PC-9 (cell line): ENCODE measurements at regions of chr1 and their contacts with region 1.

Region 1: DNA sequence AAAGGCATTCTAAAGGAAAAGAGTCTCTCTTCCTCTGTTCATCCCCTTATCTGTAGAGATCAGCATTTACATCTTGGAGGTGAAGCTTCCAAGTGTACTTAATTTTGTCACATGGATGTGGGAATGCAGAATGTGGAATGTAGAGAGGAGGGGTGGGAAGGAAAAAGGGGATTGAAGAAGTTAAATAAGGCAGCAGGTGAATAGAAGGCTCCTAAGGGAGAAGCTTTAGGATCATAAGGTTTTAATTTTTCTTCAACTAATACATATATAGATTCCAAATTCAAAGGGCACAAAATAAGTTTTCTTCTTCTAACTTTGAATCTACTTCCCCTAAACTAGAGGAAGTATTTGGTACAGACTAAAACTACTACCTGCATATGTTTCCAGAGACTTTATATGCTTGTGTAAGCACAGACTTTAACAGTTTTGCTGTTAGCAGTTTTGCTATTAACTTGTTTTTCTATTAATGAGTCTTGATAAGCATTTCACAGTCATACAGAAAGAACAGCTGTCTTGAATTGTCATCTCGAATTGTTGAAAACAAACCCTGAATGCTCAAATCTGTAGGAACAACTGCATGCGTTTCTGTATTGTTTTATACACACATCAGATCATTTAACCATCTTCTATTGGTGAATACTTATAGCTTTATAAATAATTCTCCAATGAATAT is 12.7 kb downstream of the TENT5C start:
- DNase-seq: no peak
- H3K4me3 ChIP-seq: no peak overlapping the region
- H3K27ac ChIP-seq: no peak overlapping the region
- H3K4me1 ChIP-seq: peaks cover 2% of the 10 kb centered on the region
- H3K27me3 ChIP-seq: no peaks in the 10 kb centered on the region
- CTCF ChIP-seq: no peak

Region 2: DNA sequence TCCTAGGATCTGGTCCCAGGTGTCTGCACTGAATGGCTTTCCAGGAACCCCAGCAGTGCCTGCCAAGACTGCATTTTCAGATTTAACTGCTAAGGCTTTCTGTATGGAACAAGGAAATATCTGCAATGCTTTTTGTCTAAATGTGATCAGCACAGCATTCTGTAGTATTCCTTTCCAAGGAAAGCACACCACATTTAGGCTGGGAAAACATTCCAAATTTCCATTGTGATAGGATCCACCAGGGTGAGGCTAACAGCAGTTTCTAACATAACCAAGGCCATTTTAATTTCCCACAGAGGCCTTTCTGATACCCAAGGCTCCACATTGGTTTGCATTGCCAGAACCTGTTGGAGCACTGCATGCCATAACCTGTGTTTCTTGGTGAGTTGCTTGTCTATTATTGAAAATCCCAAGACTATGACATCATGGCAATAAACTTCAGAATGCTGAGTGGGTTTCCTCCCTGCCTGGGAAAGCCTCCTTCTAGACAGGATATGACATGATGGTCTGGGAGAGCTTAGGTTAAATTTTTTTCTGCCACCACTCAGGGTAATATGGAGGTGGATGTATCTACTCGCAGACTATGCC is 732.2 kb before region 1 on chr1:
- CTCF ChIA-PET with region 1: no interaction called
- POLR2A ChIA-PET with region 1: interaction called, 26 read pairs
- intact Hi-C with region 1: no loop called
- DNase-seq: peak in 1 of 2 experiments; percentile 56
- H3K4me3 ChIP-seq: no peak overlapping the region
- H3K27ac ChIP-seq: no peak overlapping the region
- H3K4me1 ChIP-seq: no peaks in the 10 kb centered on the region
- H3K27me3 ChIP-seq: no peaks in the 10 kb centered on the region
- CTCF ChIP-seq: no peak

Region 3: GRCh38 chr1:117679868-117680267 is 61.3 kb after region 1 on chr1:
- CTCF ChIA-PET with region 1: no interaction called
- POLR2A ChIA-PET with region 1: interaction called, 10 read pairs
- intact Hi-C with region 1: no loop called
- DNase-seq: no peak
- H3K4me3 ChIP-seq: no peak overlapping the region
- H3K27ac ChIP-seq: no peak overlapping the region
- H3K4me1 ChIP-seq: no peaks in the 10 kb centered on the region
- H3K27me3 ChIP-seq: no peaks in the 10 kb centered on the region
- CTCF ChIP-seq: no peak